Activated CD4-positive, alpha-beta memory T cell treated with anti-CD3 and anti-CD28 coated beads for 36 hours (primary cell): ENCODE measurements at regions of chr16 and their contacts with region 1.

Region 1: GRCh38 chr16:17467923-17468540 is 2.7 kb downstream of the XYLT1 start:
- DNase-seq: peak; percentile 68
- H3K4me3 Mint-ChIP-seq: no peak overlapping the region
- H3K27ac Mint-ChIP-seq: no peak overlapping the region
- H3K4me1 Mint-ChIP-seq: peaks cover 42% of the 10 kb centered on the region
- H3K27me3 Mint-ChIP-seq: no peaks in the 10 kb centered on the region

Region 2: GRCh38 chr16:17194190-17194780 is 273.7 kb before region 1 on chr16:
- CTCF ChIA-PET with region 1: interaction called, 24 read pairs
- POLR2A ChIA-PET with region 1: no interaction called
- intact Hi-C with region 1: loop called (anchors 5 kb)
- DNase-seq: peak; percentile 69
- H3K4me3 Mint-ChIP-seq: no peak overlapping the region
- H3K27ac Mint-ChIP-seq: no peak overlapping the region
- H3K4me1 Mint-ChIP-seq: no peaks in the 10 kb centered on the region
- H3K27me3 Mint-ChIP-seq: no peaks in the 10 kb centered on the region

Region 3: DNA sequence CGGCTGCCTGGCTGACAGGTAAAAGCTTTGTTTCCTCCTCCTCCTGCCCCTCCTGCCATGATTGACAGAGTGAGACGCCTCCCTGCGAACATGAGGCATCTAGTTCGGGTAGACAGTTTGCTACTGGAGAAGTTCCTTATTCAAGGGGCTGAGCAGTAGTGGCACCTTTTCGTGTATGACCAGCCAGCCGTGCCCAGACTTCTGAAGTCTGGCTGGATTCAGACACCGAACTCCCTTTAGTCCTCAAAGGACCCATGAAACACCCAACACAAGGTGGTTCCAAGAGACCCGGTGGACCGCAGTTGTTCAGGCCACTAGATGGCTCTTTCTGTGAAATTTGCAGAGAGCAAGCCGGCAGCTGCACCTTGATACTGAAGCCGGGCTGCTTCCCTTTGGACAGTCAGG is 190.1 kb before region 1 on chr16:
- CTCF ChIA-PET with region 1: interaction called, 4 read pairs
- POLR2A ChIA-PET with region 1: no interaction called
- intact Hi-C with region 1: loop called (anchors 2 kb)
- DNase-seq: no peak
- H3K4me3 Mint-ChIP-seq: no peak overlapping the region
- H3K27ac Mint-ChIP-seq: no peak overlapping the region
- H3K4me1 Mint-ChIP-seq: peaks cover 33% of the 10 kb centered on the region
- H3K27me3 Mint-ChIP-seq: no peaks in the 10 kb centered on the region

Region 4: GRCh38 chr16:17416461-17417311 is 51.3 kb before region 1 on chr16:
- CTCF ChIA-PET with region 1: interaction called, 17 read pairs
- POLR2A ChIA-PET with region 1: interaction called, 7 read pairs
- intact Hi-C with region 1: loop called (anchors 2 kb)
- DNase-seq: peak; percentile 73
- H3K4me3 Mint-ChIP-seq: peak overlapping the region; percentile 63
- H3K27ac Mint-ChIP-seq: peak overlapping the region; percentile 94
- H3K4me1 Mint-ChIP-seq: peaks cover 48% of the 10 kb centered on the region
- H3K27me3 Mint-ChIP-seq: no peaks in the 10 kb centered on the region

Region 5: GRCh38 chr16:17511340-17511739 is 43.3 kb after region 1 on chr16:
- CTCF ChIA-PET with region 1: no interaction called
- POLR2A ChIA-PET with region 1: no interaction called
- intact Hi-C with region 1: no loop called
- DNase-seq: no peak
- H3K4me3 Mint-ChIP-seq: no peak overlapping the region
- H3K27ac Mint-ChIP-seq: no peak overlapping the region
- H3K4me1 Mint-ChIP-seq: no peaks in the 10 kb centered on the region
- H3K27me3 Mint-ChIP-seq: peaks cover 6% of the 10 kb centered on the region